Activated naive CD4-positive, alpha-beta T cell treated with anti-CD3 and anti-CD28 coated beads for 36 hours (primary cell): ENCODE measurements at regions of chr19 and their contacts with region 1.

Region 1: GRCh38 chr19:40529093-40529954 is 47.3 kb upstream of the SHKBP1 start:
- DNase-seq: peak; percentile 92
- H3K4me3 Mint-ChIP-seq: peak overlapping the region; percentile 43
- H3K27ac Mint-ChIP-seq: no peak overlapping the region
- H3K4me1 Mint-ChIP-seq: peaks cover 10% of the 10 kb centered on the region
- H3K27me3 Mint-ChIP-seq: peaks cover 13% of the 10 kb centered on the region

Region 2: GRCh38 chr19:40570313-40571004 is 41.1 kb after region 1 on chr19:
- CTCF ChIA-PET with region 1: no interaction called
- intact Hi-C with region 1: loop called (anchors 1 kb)
- DNase-seq: peak; percentile 96
- H3K4me3 Mint-ChIP-seq: peak overlapping the region; percentile 64
- H3K27ac Mint-ChIP-seq: peak overlapping the region; percentile 41
- H3K4me1 Mint-ChIP-seq: peaks cover 15% of the 10 kb centered on the region
- H3K27me3 Mint-ChIP-seq: peaks cover 25% of the 10 kb centered on the region

Region 3: DNA sequence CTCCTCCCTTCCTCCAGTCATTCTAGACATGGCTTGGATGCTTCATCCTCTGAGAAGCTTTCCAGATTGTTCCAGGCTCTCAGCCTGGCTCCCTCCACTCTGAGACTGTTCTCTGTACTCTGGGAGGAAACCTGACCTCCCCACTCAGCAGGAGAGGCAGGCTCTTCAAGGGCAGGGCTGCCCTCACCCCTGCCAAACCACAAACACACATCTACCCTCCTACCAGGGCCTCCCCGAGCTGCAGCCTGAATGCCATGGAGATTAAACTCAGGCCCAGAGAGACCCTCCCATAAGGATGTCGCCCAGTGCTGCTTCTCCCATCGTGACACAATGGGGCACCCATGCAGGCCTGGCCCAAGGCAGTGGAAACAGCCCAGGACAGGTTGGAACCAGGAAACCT is 145.0 kb after region 1 on chr19:
- CTCF ChIA-PET with region 1: no interaction called
- intact Hi-C with region 1: no loop called
- DNase-seq: no peak
- H3K4me3 Mint-ChIP-seq: no peak overlapping the region
- H3K27ac Mint-ChIP-seq: no peak overlapping the region
- H3K4me1 Mint-ChIP-seq: no peaks in the 10 kb centered on the region
- H3K27me3 Mint-ChIP-seq: no peaks in the 10 kb centered on the region